Psoas muscle (tissue), 8 donors: ENCODE measurements at regions of chr4 and their contacts with region 1.

Region 1: GRCh38 chr4:26081795-26082498 is 167.9 kb downstream of the SMIM20 start:
- DNase-seq: no peak
- ATAC-seq: peak in 1 of 4 donors; percentile 49
- H3K4me3 ChIP-seq: no peak overlapping the region
- H3K27ac ChIP-seq: no peak overlapping the region
- H3K4me1 ChIP-seq: peaks cover 34% of the 10 kb centered on the region
- H3K27me3 ChIP-seq: no peaks in the 10 kb centered on the region
- CTCF ChIP-seq: peak; percentile 63

Region 2: DNA sequence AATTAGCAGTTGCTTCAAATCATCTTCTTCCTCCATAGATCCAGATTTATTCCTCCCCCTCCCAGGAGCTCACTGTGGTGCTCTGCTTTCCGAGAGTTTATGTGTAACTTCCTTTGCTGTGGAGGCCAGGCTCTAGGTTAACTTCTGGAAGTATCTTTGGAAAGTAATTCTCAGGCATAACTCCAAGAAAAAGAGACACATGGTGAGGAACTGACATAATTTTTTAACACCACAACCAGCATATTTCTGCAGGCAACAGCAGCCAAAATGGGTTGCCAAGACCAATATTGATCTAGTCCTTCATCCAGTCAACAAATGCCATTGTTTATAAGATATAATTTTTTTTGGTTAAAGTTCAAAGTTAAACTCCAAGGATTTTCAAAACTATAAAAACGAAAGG is 124.4 kb after region 1 on chr4:
- intact Hi-C with region 1: loop called in 1 of 2 experiments (anchors 10 kb)
- DNase-seq: no peak
- ATAC-seq: no peak
- H3K4me3 ChIP-seq: no peak overlapping the region
- H3K27ac ChIP-seq: no peak overlapping the region
- H3K4me1 ChIP-seq: no peaks in the 10 kb centered on the region
- H3K27me3 ChIP-seq: no peaks in the 10 kb centered on the region
- CTCF ChIP-seq: no peak